ENCODE measurements at regions of chr2 and their contacts with region 1.

Region 1: GRCh38 chr2:85642725-85643124 is 25.3 kb downstream of the SFTPB start:
- DNase-seq: no peak
- H3K4me3 Mint-ChIP-seq: no peak overlapping the region
- H3K27ac Mint-ChIP-seq: no peak overlapping the region
- H3K4me1 Mint-ChIP-seq: no peaks in the 10 kb centered on the region
- H3K27me3 Mint-ChIP-seq: no peaks in the 10 kb centered on the region
- CTCF ChIP-seq: no peak

Region 2: DNA sequence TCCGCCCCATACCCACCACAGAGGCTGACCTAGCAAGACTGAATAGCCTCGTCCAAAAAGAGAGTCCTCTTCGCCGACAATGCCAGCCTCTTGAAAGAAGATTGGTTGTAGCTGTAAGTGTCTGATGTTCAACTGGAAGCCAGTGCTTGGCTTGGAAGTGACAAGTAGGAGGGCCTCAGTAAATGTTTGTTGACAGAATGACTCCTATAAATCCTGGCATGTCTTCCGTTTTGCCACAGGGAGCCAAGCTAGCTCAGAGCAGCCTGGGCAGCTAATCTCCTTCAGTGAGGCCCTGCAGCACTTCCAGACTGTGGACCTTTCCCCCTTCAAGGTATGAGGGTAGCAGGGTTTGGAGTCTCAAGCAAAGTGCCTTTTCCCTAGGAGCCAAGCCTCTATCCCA is 273.2 kb before region 1 on chr2:
- CTCF ChIA-PET with region 1: no interaction called
- POLR2A ChIA-PET with region 1: no interaction called
- intact Hi-C with region 1: no loop called
- DNase-seq: no peak
- H3K4me3 Mint-ChIP-seq: no peak overlapping the region
- H3K27ac Mint-ChIP-seq: no peak overlapping the region
- H3K4me1 Mint-ChIP-seq: no peaks in the 10 kb centered on the region
- H3K27me3 Mint-ChIP-seq: no peaks in the 10 kb centered on the region
- CTCF ChIP-seq: no peak

Region 3: DNA sequence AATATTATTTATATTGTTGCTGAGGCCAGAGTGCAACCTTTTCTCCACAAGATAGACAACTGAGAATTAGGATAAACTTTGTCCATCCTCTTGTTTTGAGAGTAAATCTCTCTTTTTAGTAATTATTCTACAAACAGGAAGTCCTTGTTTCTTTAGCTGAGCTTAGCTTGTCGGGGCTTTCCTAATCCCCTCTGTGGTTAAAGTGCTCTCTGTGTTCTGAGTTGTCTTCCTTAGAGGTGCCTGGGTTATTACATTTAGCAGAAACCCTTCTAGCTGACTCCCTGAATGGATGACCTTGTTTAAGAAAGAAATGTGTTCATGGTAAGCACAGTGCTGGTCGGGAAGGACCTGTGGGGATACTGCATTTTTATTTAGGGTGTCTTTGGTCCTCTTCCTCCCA is 14.1 kb before region 1 on chr2:
- CTCF ChIA-PET with region 1: interaction called, 47 read pairs
- POLR2A ChIA-PET with region 1: no interaction called
- intact Hi-C with region 1: no loop called
- DNase-seq: no peak
- H3K4me3 Mint-ChIP-seq: no peak overlapping the region
- H3K27ac Mint-ChIP-seq: no peak overlapping the region
- H3K4me1 Mint-ChIP-seq: no peaks in the 10 kb centered on the region
- H3K27me3 Mint-ChIP-seq: no peaks in the 10 kb centered on the region
- CTCF ChIP-seq: no peak

Region 4: DNA sequence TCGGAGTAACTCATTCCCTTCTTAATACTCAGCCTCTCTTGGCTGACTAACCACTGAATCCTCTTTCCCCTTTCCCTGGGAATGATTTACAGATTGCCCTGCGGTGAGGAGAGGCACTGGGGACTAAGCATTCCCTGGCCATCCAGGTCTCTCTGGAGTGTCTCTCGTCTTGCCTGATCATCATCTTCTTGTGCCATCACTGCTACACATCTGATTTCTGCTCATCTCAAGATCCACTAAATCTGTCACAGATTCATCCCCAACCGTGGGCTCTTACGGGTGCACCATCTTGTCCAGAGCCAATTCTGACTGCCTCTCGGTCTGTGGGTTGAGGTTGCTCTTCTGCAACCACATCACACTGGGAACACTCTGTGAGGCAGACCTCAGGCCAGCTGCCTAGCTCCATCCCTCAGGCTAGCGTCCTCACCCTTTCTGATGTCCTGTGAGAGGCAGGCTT is 13.3 kb after region 1 on chr2:
- CTCF ChIA-PET with region 1: interaction called, 52 read pairs
- POLR2A ChIA-PET with region 1: interaction called, 5 read pairs
- intact Hi-C with region 1: no loop called
- DNase-seq: no peak
- H3K4me3 Mint-ChIP-seq: no peak overlapping the region
- H3K27ac Mint-ChIP-seq: no peak overlapping the region
- H3K4me1 Mint-ChIP-seq: no peaks in the 10 kb centered on the region
- H3K27me3 Mint-ChIP-seq: no peaks in the 10 kb centered on the region
- CTCF ChIP-seq: no peak

Measured in MCF 10A (cell line).